Transverse colon (tissue), 4 donors: ENCODE measurements at regions of chr19 and their contacts with region 1.

Region 1: GRCh38 chr19:13033819-13034611 is 38.7 kb downstream of the NFIX start:
- DNase-seq: peak; percentile 88
- H3K4me3 ChIP-seq: no peak overlapping the region
- H3K27ac ChIP-seq: peak overlapping the region; percentile 79 to 87 (median 80)
- H3K4me1 ChIP-seq: peaks cover 68 to 99% (median 79%) of the 10 kb centered on the region in 4 donors
- H3K27me3 ChIP-seq: no peaks in the 10 kb centered on the region
- CTCF ChIP-seq: peak; percentile 76 to 95 (median 84)
- EP300 ChIP-seq: peak; percentile 29
- POLR2A ChIP-seq: peak; percentile 52

Region 2: DNA sequence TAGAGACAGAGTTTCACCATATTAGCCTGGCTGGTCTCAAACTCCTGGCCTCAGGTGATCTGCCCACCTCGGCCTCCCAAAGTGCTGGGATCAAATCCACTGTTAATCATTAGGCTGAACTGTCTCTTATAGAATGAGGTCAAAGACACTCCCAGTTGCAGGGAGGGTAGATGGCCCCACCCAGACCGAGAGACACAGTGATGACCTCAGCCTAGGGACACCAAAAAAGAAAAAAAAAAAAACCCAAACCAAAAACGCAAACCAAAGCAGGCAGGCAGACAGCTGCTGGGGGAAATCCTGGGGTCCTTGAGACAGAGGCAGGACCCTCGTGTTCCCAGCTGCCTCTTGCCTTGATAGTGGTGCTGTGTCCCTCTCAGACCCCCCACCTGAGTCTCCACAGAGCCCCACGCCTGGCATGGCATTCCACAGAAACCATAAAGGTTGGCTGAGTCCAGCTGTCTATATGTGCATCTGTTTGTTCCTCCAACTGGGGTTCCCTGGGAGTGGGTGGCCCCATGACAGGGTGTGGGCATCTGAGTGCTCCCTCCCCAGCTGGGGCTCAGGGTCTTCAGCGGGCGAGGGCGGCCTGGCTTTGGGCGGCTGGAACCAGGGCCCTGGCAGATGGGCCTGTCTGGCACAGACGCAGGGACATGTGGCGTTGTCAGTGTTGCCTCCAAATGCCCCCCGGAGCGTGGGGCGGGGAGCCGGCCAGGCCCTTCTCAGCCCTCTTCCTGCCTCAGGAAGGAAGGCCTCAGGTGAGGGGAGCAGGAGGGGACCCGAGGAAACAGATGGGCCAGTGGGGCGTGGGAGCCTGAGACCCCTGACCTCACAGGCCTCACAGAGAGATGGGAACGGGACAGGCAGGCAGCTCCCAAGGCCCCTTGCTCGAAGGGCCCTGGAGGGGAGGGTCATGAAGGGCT is 59.5 kb before region 1 on chr19:
- in situ Hi-C with region 1: no loop called
- intact Hi-C with region 1: no loop called
- DNase-seq: no peak
- H3K4me3 ChIP-seq: no peak overlapping the region
- H3K27ac ChIP-seq: no peak overlapping the region
- H3K4me1 ChIP-seq: peaks cover 0 to 3% (median 0%) of the 10 kb centered on the region in 4 donors
- H3K27me3 ChIP-seq: no peaks in the 10 kb centered on the region
- CTCF ChIP-seq: no peak
- EP300 ChIP-seq: no peak
- POLR2A ChIP-seq: no peak

Region 3: DNA sequence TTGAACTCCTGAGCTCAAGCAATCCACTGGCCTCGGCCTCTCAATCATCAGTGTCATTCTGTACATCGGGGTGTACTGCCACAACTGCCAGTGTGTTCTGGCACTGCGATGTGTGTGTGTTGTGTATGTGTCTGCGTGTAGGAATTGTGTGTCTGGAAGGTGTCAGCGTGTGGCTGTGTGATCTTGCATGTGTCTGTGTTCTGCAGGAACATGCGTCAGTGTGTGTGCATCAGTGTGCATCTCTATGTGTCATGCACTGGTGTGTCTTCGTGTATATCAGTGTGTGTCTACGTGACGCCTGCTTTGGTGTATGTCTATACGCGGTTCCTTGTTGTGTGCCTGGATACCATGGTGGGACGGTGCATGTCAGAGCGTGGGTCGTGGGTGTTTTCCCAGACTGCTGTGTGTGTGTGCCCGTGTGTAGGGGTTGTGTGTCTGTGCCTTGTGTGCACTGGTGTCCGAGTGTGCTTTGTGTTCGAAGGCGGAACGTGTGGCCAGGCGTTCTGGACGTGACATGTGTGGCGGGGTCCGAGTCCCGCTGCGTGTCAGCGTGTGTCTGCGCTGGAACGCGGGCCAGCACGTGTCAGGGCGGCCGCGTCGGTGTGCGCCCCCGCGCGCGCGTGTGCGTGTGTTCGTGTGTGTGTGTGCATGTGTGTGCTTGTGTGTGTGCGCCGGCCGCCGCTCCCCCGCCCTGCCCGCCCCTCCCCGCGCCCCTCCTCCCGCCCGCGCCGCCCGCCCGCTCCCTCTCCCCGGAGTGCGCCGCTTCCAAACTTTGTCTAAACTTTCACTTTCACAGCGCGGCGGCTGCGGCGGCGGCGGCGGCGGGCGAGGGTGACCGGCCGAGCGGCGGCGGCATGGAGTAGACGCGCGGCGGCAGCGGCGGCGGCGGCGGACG is 39.1 kb before region 1 on chr19 and contains the start of gene NFIX:
- in situ Hi-C with region 1: no loop called
- intact Hi-C with region 1: loop called (anchors 5 kb)
- DNase-seq: peak; percentile 70
- H3K4me3 ChIP-seq: peak within 1 kb of the TSS; percentile 59 to 75 (median 65)
- H3K27ac ChIP-seq: peak within 1 kb of the TSS; percentile 87 to 91 (median 89)
- H3K4me1 ChIP-seq: peaks cover 0 to 22% (median 10%) of the 10 kb centered on the region in 4 donors
- H3K27me3 ChIP-seq: no peaks in the 10 kb centered on the region
- CTCF ChIP-seq: no peak
- EP300 ChIP-seq: no peak
- POLR2A ChIP-seq: no peak
- total RNA-seq, gene NFIX: 25.4 to 53.1 (median 29.3) TPM

Region 4: GRCh38 chr19:14472202-14472938 is 1438.4 kb after region 1 on chr19:
- in situ Hi-C with region 1: no loop called
- intact Hi-C with region 1: no loop called
- DNase-seq: peak; percentile 76
- H3K4me3 ChIP-seq: peak overlapping the region in 2 of 4 donors; percentile 25 to 38
- H3K27ac ChIP-seq: no peak overlapping the region
- H3K4me1 ChIP-seq: peaks cover 19 to 38% (median 34%) of the 10 kb centered on the region in 4 donors
- H3K27me3 ChIP-seq: peaks cover 34% of the 10 kb centered on the region
- CTCF ChIP-seq: peak; percentile 96 to 100 (median 99)
- EP300 ChIP-seq: no peak
- POLR2A ChIP-seq: no peak